ENCODE measurements at regions of chr6 and their contacts with region 1.

Region 1: DNA sequence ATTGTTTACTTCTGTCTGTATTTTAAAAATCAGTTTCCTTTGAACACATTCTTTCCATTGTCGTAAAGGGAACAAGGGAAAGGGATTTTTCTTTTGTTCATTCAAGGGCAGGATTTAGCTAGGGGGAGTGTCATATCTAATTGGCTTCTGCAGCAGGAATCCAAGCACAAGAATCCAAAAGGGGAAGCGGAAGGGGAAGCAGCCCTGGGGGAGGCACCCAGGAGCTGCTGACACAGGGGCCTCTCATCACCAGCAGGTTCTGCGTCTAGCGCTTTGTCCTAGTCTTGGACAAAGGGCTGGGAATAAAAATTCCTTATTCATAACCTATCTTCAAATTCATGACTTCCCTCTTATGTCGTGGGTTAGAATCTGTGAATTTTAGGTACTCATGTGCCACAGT is 13.7 kb downstream of the RIPK1 start:
- DNase-seq: no peak
- ATAC-seq: no peak
- H3K4me3 ChIP-seq: no peak overlapping the region
- H3K27ac ChIP-seq: no peak overlapping the region
- H3K4me1 ChIP-seq: no peaks in the 10 kb centered on the region
- H3K27me3 ChIP-seq: no peaks in the 10 kb centered on the region
- CTCF ChIP-seq: no peak

Region 2: DNA sequence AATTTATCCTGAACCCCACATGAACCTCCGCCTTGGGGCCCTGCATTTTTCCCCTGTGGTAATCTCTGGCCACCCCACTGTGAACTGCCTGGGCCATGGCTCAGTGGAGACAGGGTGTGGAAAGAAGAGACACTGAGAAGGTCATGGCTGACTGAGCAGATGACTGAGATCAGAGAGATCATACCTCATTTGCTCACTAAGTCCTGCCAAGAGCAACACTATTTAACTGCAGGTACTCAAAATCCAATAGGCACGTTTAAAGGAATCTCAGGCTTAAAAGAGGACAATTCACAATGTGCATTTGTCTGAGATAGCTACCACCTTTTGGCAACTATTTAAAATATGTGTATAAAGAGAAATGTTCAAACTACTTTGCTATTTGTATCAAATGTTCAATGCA is 1141.6 kb before region 1 on chr6:
- CTCF ChIA-PET with region 1: no interaction called
- POLR2A ChIA-PET with region 1: no interaction called
- intact Hi-C with region 1: no loop called
- DNase-seq: no peak
- ATAC-seq: no peak
- H3K4me3 ChIP-seq: no peak overlapping the region
- H3K27ac ChIP-seq: no peak overlapping the region
- H3K4me1 ChIP-seq: no peaks in the 10 kb centered on the region
- H3K27me3 ChIP-seq: no peaks in the 10 kb centered on the region
- CTCF ChIP-seq: no peak

Region 3: GRCh38 chr6:3157131-3157927 is 75.4 kb after region 1 on chr6 and contains the start of gene TUBB2A:
- CTCF ChIA-PET with region 1: no interaction called
- POLR2A ChIA-PET with region 1: no interaction called
- intact Hi-C with region 1: no loop called
- DNase-seq: peak; percentile 81
- ATAC-seq: peak; percentile 63
- H3K4me3 ChIP-seq: peak within 1 kb of the TSS; percentile 92
- H3K27ac ChIP-seq: 0 out of 2 replicates have a peak within 1 kb of the TSS, but pooled peaks have one; percentile 8
- H3K4me1 ChIP-seq: peaks cover 12% of the 10 kb centered on the region
- H3K27me3 ChIP-seq: no peaks in the 10 kb centered on the region
- CTCF ChIP-seq: peak; percentile 54
- total RNA-seq, gene TUBB2A: 66.8 and 70.2 TPM in 2 replicates

Region 4: GRCh38 chr6:3239110-3239830 is 157.3 kb after region 1 on chr6:
- CTCF ChIA-PET with region 1: no interaction called
- POLR2A ChIA-PET with region 1: interaction called, 11 read pairs
- intact Hi-C with region 1: no loop called
- DNase-seq: peak; percentile 41
- ATAC-seq: peak; percentile 77
- H3K4me3 ChIP-seq: no peak overlapping the region
- H3K27ac ChIP-seq: no peak overlapping the region
- H3K4me1 ChIP-seq: no peaks in the 10 kb centered on the region
- H3K27me3 ChIP-seq: 0 out of 2 replicates have a peak, but pooled peaks cover 3% of the 10 kb centered on the region
- CTCF ChIP-seq: peak; percentile 55

Measured in PC-3 (cell line).